ENCODE measurements at regions of chr9 and their contacts with region 1.

Region 1: DNA sequence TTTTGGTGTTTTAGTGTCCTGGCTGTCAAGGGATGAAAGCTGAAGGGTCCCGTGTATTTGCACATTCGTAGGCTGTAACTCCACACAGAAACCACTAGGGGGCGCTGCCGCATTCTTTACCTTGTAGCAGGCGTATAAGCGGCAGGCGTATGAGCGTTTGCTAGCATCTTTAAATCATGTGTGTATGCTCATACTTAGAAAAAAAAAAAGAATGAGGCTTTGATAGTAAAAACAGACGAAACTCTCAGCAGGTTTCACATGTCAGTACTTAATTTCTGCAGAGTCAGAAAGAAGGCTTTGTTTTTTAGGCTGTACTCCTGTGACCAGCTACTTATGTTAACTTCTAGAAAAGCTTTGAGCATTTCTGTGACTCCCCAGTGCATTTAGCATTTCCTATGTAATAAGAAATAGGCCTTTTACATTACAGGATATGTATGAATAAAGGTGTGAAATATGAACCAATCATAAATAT is 218.8 kb upstream of the ADAMTSL1 start:
- DNase-seq: peak; percentile 79
- H3K4me3 ChIP-seq: no peak overlapping the region
- H3K27ac ChIP-seq: no peak overlapping the region
- H3K4me1 ChIP-seq: no peaks in the 10 kb centered on the region
- CTCF ChIP-seq: peak; percentile 98

Region 2: GRCh38 chr9:18396102-18396728 is 141.0 kb after region 1 on chr9:
- CTCF ChIA-PET with region 1: interaction called, 4 read pairs
- POLR2A ChIA-PET with region 1: no interaction called
- intact Hi-C with region 1: loop called (anchors 5 kb)
- DNase-seq: peak; percentile 41
- H3K4me3 ChIP-seq: no peak overlapping the region
- H3K27ac ChIP-seq: no peak overlapping the region
- H3K4me1 ChIP-seq: no peaks in the 10 kb centered on the region
- CTCF ChIP-seq: peak; percentile 67

Region 3: DNA sequence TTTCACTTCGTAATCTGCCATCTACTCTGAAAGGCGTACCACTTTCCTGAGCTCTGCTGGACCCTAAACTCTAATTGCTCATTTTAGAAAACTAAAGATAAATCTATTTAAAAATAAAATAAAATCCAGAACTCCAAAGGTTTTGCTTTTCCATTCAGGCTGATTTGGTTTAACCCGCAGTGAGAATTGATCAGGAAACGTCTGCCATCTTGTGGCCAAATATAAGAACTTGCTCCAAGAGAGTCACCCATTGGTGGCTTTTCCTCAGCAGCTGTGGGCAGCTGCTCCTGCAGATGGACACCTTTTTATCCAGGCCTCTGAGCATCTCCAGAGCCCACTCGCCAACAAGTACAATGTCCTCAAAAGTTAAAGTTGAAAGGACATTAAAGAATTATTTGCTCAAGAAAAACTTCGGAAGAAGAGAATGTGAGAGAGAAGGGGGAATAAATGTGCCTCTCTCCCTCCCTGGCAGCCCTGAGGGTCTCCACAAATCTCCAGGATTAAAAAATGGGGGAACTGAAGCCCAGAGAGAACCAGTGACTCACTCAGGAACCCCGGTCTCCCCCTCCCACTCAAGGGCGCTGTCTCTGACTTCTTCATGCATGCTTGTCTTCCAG is 773.7 kb after region 1 on chr9:
- CTCF ChIA-PET with region 1: no interaction called
- POLR2A ChIA-PET with region 1: no interaction called
- intact Hi-C with region 1: loop called (anchors 5 kb)
- DNase-seq: peak; percentile 52
- H3K4me3 ChIP-seq: no peak overlapping the region
- H3K27ac ChIP-seq: no peak overlapping the region
- H3K4me1 ChIP-seq: no peaks in the 10 kb centered on the region
- CTCF ChIP-seq: peak; percentile 90